ENCODE measurements at regions of chr19 and their contacts with region 1.

Region 1: DNA sequence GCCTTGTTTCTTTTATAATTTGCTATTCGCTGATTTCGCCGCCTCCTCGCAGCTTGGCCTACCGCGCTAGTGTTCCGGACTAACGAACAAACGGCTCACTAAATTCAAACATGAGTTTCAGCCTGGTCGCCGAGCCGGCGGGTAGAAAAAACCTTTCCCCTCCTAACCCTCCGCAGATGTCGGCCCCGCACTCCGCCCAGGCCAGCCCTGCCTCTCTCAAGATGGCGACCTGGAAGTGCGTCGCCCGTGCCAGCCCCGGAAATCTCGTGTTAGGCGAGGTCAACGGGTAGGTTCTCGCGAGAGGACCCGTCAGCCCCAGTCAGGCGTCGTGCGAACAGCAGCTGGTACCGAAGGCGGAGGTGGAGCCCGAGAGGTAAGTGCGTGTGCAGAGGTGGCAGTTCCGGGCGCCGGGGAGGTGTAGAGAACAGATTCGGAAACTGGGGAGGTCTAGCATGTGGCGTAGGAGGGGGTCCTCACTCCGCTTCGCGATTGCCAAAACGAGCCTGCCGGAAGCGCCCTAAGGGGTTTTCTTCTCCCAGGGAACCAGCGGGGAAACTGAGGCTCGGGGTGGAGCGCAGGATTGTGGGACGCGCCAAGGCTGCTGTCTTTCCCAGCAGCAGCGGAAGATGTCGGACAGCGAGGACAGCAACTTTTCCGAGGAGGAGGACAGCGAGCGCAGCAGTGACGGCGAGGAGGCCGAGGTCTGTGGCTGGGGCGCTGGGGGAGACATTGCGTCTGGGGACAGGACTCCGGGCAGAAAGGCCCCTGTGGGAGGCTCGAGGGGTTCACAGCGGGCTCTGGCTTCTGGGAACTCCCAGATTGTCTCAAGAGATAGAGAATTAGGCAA is at the start of gene SUPT5H:
- DNase-seq: peak; percentile 97
- ATAC-seq: peak; percentile 90
- H3K4me3 ChIP-seq: peak within 1 kb of the TSS; percentile 87
- H3K27ac ChIP-seq: peak within 1 kb of the TSS; percentile 95
- H3K4me1 ChIP-seq: peaks cover 28% of the 10 kb centered on the region
- H3K27me3 ChIP-seq: no peaks in the 10 kb centered on the region
- CTCF ChIP-seq: no peak
- EP300 ChIP-seq: peak in 1 of 2 experiments; percentile 25; a peak in 1 of 4 replicates
- POLR2A ChIP-seq: peak; percentile 95
- RAD21 ChIP-seq: no peak
- polyA plus RNA-seq, gene SUPT5H: 27.2 to 75.0 TPM

Region 2: GRCh38 chr19:39390755-39391592 is 54.5 kb before region 1 on chr19 and contains the starts of genes MED29 and PAF1:
- CTCF ChIA-PET with region 1: interaction called, 3 read pairs
- POLR2A ChIA-PET with region 1: no interaction called
- RAD21 ChIA-PET with region 1: interaction called, 5 read pairs
- SMC1A ChIA-PET with region 1: no interaction called
- in situ Hi-C with region 1: no loop called
- intact Hi-C with region 1: loop called (anchors 2 kb)
- DNase-seq: peak; percentile 100
- ATAC-seq: peak; percentile 99
- H3K4me3 ChIP-seq: peak within 1 kb of the TSS; percentile 99
- H3K27ac ChIP-seq: peak within 1 kb of the TSS; percentile 96
- H3K4me1 ChIP-seq: peaks cover 10% of the 10 kb centered on the region
- H3K27me3 ChIP-seq: no peaks in the 10 kb centered on the region
- CTCF ChIP-seq: 0 out of 6 replicates have a peak, but pooled peaks of 1 of the 3 experiments have one; percentile 10
- EP300 ChIP-seq: no peak
- POLR2A ChIP-seq: peak; percentile 94
- RAD21 ChIP-seq: no peak
- polyA plus RNA-seq, gene MED29: 3.2 to 5.1 TPM
- polyA plus RNA-seq, gene PAF1: 1.7 to 3.7 TPM

Region 3: GRCh38 chr19:39397360-39398296 is 47.9 kb before region 1 on chr19:
- CTCF ChIA-PET with region 1: interaction called, 14 read pairs
- POLR2A ChIA-PET with region 1: interaction called, 3 read pairs
- RAD21 ChIA-PET with region 1: interaction called, 7 read pairs
- SMC1A ChIA-PET with region 1: no interaction called
- in situ Hi-C with region 1: no loop called
- intact Hi-C with region 1: no loop called
- DNase-seq: no peak
- ATAC-seq: peak; percentile 78
- H3K4me3 ChIP-seq: peak overlapping the region; percentile 26
- H3K27ac ChIP-seq: peak overlapping the region; percentile 99
- H3K4me1 ChIP-seq: peaks cover 54% of the 10 kb centered on the region
- H3K27me3 ChIP-seq: no peaks in the 10 kb centered on the region
- CTCF ChIP-seq: peak; percentile 97 to 98 (median 98); a peak in 5 of 6 replicates
- EP300 ChIP-seq: peak in 1 of 2 experiments; percentile 4; a peak in 1 of 4 replicates
- POLR2A ChIP-seq: no peak; the same call in 1 of the 2 replicates
- RAD21 ChIP-seq: peak; percentile 94

Region 4: DNA sequence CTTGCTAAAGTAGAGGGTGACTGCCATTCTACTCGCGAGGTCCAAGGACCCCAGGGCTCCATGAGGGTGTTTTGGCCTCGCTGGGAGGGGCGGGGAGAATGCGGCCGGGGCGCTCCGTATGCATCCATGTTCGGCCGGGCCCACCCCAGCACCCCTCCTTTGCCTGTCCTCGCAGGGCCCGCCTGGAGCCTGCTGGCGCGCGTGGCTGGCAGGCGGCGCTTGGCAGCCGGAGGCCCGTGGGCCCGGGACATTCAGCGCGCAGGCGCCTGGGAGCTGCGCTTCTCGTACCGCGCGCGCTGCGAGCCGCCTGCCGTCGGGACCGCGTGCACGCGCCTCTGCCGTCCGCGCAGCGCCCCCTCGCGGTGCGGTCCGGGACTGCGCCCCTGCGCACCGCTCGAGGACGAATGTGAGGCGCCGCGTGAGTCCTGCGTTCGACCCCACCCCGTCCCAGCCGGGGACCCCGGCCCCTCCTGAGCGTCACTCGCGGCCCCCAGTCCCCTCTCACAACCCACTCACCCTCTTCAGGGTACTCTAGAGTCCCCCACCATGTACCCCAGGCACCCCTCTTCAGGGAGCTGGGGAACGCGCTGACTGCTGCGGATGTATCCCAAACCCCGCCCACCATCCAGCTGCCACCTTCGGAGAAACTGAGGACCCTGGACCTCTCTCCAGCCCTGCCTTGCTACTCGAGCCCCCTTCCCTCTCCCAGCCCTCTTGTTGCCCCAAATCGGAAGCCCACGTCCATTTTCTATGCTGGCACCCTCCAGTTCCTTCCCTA is 57.3 kb after region 1 on chr19:
- CTCF ChIA-PET with region 1: interaction called, 16 read pairs
- POLR2A ChIA-PET with region 1: interaction called, 5 read pairs
- RAD21 ChIA-PET with region 1: interaction called, 13 read pairs
- SMC1A ChIA-PET with region 1: interaction called, 8 read pairs
- in situ Hi-C with region 1: no loop called
- intact Hi-C with region 1: loop called (anchors 5 kb)
- DNase-seq: no peak
- ATAC-seq: peak; percentile 46
- H3K4me3 ChIP-seq: no peak overlapping the region
- H3K27ac ChIP-seq: no peak overlapping the region
- H3K4me1 ChIP-seq: peaks cover 15% of the 10 kb centered on the region
- H3K27me3 ChIP-seq: peaks cover 0 to 16% of the 10 kb centered on the region in 2 experiments; a peak in 3 of 4 replicates
- CTCF ChIP-seq: peak; percentile 70 to 80 (median 75)
- EP300 ChIP-seq: no peak
- POLR2A ChIP-seq: no peak
- RAD21 ChIP-seq: peak; percentile 30; the same call in 1 of the 2 replicates

Region 5: DNA sequence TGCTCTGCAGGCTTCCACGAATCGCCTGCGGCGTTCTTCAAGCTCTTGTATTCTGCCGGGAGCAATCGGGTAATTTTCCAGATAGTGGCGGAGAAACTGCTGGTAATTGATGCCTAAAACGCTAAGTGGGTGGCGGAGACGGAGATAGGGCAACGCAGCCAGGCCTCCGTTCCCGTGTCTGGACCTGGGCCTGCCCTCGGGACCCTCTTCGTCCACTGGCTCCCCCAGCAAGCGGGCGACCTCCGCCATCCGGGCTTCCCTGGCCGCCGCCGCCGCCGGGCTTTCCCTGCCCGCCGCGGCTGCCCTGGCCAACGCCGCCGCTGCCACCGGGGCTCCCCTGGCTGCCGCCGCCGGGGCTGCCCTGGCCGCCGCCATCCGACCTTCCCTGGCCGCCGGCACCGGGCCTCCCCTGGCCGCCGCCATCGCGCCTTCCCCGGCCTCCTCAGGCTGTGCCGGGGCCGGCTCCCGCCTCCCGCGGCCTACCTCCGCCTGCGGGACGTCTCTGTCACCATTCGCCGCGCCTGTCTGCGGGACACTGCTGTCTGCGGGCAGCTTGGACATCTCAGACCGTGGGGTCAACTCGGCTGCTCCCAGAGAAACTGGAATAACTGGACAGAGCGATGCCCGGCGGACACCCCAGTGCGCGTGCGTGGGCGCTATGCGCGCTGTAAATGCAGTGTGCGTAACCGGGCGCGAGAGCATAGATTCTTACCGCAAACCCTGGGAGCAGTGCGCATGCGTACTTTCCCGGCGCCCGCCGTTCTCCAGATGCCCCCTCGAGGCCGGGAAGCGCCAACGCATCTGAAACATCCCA is 94.2 kb after region 1 on chr19 and contains the start of gene EID2:
- CTCF ChIA-PET with region 1: interaction called, 63 read pairs
- POLR2A ChIA-PET with region 1: interaction called, 3 read pairs
- RAD21 ChIA-PET with region 1: interaction called, 8 read pairs
- SMC1A ChIA-PET with region 1: interaction called, 26 read pairs
- in situ Hi-C with region 1: loop called (anchors 5 kb)
- intact Hi-C with region 1: loop called (anchors 1 kb)
- DNase-seq: peak; percentile 72
- ATAC-seq: peak; percentile 97
- H3K4me3 ChIP-seq: peak within 1 kb of the TSS; percentile 68
- H3K27ac ChIP-seq: peak within 1 kb of the TSS; percentile 80
- H3K4me1 ChIP-seq: peaks cover 9% of the 10 kb centered on the region
- H3K27me3 ChIP-seq: no peaks in the 10 kb centered on the region
- CTCF ChIP-seq: peak; percentile 89 to 95 (median 91)
- EP300 ChIP-seq: no peak
- POLR2A ChIP-seq: peak; percentile 87
- RAD21 ChIP-seq: peak; percentile 44; the same call in 1 of the 2 replicates
- polyA plus RNA-seq, gene EID2: 2.7 to 4.4 TPM

Region 6: GRCh38 chr19:39599116-39599515 is 153.6 kb after region 1 on chr19:
- CTCF ChIA-PET with region 1: no interaction called
- POLR2A ChIA-PET with region 1: no interaction called
- RAD21 ChIA-PET with region 1: no interaction called
- SMC1A ChIA-PET with region 1: no interaction called
- in situ Hi-C with region 1: no loop called
- intact Hi-C with region 1: no loop called
- DNase-seq: no peak
- ATAC-seq: no peak
- H3K4me3 ChIP-seq: no peak overlapping the region
- H3K27ac ChIP-seq: no peak overlapping the region
- H3K4me1 ChIP-seq: no peaks in the 10 kb centered on the region
- H3K27me3 ChIP-seq: no peaks in the 10 kb centered on the region; a peak in 1 of 4 replicates
- CTCF ChIP-seq: no peak
- EP300 ChIP-seq: no peak
- POLR2A ChIP-seq: no peak
- RAD21 ChIP-seq: no peak